ENCODE measurements at regions of chr7 and their contacts with region 1.

Region 1: GRCh38 chr7:129952653-129953560 is at the start of gene UBE2H:
- DNase-seq: peak; percentile 90 to 99 (median 96)

Region 2: DNA sequence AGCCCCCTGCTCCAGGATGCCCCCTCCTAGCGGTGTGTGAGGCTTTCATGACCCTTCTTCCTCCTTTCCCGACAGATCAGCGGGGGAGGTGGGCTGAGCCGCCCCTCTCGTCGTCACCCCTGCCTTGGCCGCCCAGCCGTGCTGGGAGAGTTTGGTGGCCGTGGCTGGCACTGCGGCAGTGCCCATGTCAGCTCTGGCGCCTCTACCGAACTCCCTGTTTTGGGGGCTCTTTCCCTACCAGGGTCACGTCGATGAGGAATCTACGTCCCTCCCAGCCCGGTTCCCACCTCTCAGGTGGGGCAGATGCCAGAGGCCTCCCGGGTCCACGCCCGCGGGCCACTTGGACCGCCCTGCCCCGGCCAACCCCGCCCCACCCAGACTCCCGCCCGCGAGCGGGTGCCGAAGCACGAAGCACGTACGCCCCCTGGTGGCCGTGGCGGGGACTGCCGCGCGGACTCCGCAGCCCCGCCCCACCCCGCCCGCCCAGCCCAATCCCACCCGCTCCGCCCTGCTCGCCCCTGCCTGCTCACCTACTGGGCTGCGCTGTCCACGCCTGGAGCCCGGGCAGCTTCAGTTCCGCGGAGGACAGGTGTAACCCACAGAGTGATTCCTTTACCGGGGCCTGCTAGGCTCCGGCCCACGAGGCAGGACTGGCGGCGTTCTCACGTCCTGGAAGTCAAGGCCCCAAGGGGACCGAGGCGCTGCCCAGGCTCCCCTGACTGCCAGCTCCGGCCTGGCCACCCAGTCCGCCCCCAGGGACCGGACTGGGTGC is 127.2 kb before region 1 on chr7:
- intact Hi-C with region 1: loop called (anchors 2 kb)
- DNase-seq: peak; percentile 71 to 97 (median 90)

Region 3: GRCh38 chr7:129875745-129876411 is 77.0 kb before region 1 on chr7:
- intact Hi-C with region 1: loop called (anchors 10 kb)
- DNase-seq: no peak

Region 4: DNA sequence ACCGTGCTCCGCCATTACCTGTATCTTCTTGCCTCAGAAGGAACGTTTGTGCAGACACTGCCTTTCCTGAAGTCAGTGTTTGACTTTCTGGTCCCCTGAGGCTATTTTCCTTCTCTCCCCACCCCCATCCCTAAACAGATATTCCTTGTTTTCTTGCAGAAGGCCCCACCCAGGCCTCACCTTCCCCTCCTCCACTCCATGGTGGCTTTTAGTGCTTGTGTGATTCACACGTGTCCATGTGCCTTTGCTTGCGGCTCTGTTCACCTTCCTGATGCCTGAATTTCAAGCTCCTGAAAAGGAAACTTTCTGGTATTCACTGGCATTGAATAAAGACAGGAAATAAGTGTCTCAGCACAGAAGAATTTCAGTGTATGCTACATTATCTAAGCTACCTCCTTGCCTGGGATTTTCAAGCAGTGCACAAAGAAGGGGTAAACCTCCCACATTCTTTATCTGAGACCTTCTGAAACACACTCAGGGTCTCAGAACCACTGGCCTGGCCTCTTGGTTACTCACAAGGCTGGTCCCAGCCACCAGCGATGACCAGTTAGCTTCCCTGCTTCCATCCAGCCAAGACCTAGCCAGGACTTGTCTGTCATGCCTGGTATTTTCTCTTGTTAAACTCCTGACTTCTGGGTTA is 17.0 kb after region 1 on chr7:
- intact Hi-C with region 1: no loop called
- DNase-seq: no peak

Region 5: DNA sequence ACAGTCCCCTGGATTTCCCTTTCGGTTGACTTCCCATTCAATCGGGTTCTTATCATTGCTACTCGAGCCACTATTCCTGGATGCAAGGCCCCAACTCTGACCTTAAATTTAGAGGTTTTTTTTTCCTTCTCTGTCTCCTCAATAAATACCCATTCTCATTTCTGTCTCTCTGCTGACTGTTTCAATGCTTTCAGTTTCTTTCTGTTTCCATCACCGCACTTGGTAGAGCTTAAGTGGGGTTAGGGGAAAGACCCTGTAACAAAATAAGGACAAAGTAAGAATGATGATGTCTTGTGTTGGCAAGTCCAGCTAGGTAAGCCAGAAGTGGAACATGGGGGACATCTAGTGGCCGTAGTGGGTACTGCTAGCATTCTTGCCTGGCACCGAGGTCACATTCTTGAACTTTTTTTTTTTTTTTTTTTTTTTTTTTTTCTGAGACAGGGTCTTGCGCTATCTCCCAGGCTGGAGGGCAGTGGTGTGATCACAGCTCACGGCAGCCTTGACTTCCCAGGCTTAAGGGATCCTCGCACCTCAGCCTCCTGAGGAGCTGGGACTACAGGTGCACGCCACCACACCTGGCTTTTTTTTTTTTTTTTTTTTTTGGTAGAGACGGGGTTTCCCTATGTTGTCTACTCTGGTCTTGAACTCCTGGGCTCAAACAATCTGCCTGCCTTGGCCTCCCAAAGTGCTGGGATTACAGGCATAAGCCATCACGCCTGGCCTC is 57.9 kb after region 1 on chr7:
- intact Hi-C with region 1: loop called (anchors 2 kb)
- DNase-seq: peak; percentile 43 to 93 (median 82)